Head of caudate nucleus (tissue), 42 donors: ENCODE measurements at regions of chr3 and their contacts with region 1.

Region 1: GRCh38 chr3:69161587-69162307 is 39.4 kb upstream of the LMOD3 start:
- DNase-seq: peak in 29 of 42 donors; percentile 13 to 83 (median 53)

Region 2: DNA sequence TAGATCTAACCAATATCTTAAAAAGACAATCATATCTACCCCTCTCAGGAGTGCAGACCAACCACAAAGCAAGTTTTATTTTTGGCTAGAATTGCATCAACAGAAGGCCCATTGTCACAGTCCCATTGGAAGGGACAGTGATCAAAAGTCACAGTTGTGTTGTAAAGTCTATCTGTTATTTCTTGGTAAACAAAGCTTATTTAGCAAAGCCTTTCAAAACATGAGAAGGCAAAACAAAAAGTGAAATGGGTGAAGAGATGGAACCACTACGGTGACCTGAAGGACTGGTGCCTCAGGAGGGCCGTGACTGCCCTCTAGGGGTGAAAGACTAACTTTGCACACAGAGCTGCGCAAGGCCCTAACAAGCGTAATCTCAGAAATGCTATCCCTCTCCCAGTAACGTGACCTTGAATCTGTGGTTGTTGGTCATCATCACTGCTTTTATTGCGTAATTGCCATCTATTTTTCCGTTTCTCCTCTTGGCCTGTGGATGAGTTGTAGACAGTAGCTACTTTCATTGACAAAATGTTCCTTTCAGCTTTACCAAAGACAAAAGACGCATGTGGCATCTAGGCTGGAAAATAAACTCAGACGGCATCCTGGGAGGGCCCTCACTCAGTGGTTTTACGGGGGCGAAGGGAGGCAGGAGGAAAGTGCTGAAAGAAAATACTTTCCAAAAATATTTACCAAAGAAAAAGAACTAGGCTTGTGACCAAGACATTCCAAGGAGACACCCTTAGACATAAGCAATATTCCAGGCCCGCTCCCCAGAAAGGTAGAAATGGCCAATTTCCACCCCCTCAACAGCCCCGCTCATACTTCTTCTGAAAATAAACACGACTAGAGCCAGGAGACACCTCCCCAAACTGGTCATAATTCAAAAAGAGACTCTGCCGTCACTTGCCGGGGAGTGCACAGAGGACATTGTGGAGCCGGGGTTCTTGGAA is 144.8 kb after region 1 on chr3:
- intact Hi-C with region 1: loop called (anchors 1 kb)
- DNase-seq: peak; percentile 41 to 92 (median 78)

Region 3: DNA sequence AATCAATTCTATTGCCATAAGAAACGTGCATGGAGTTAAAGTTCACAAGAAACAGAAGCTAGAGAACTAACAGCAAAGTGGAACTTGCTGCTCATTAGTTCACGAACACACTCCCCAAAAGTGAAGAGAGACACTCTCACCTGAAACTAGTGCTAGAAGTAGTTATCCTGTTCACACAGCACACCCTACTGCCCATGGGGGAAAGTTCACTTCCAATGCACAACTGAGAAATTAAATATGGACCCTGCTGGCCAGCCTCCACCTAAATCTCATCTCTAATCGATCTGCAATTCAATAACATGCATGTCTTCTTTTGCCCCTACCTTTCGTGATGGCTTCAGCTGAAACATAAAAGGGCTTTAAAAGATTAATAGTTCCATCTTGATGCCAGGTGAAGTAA is 263.5 kb after region 1 on chr3:
- intact Hi-C with region 1: loop called (anchors 10 kb)
- DNase-seq: peak in 20 of 42 donors; percentile 15 to 59 (median 42)

Region 4: DNA sequence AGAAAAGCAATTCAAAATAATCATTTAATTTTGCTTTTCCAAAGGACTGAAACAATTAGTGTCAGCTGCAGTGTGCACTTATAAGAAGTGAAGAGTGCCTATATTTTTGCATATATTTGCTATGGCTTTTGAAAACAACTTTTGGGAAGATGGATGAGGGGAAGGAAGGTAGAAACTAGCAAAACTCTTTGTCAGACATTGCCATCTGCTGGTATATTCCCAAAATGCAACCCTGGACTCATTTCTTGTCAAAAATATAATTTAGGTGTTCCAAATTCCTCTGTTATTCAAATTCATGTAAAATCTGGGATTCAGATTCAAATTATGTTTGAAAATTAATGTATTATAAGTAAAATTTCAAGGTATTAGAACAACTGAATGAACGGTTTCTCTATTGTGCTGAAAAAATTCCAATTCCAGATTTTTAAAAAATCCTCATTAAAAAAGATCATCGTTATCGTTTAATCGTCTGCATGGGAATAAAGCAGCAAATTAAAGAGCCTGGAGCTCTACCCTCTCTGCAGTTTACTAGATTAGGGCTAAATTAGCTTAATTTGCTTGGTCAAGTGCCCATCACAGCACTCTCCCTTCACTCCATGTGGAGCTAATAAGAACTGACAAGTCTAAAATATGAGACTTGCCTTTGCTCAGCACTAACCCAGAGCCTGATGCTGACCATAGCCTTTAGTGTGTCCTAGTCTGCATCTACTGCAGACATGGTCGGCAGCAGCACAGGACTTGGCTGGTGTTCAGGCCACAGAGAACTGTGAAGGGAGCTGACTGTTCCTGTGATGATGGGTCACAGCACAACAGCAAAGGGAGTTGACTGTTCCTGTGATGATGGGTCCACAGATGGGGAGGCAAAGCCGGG is 509.6 kb after region 1 on chr3:
- intact Hi-C with region 1: loop called (anchors 5 kb)
- DNase-seq: peak in 29 of 42 donors; percentile 6 to 90 (median 49)